HEK293 (cell line): ENCODE measurements at regions of chr1 and their contacts with region 1.

Region 1: GRCh38 chr1:161292631-161293030 is 17.1 kb downstream of the MPZ start:
- H3K4me3 ChIP-seq: no peak overlapping the region
- H3K27ac ChIP-seq: no peak overlapping the region
- H3K4me1 ChIP-seq: no peaks in the 10 kb centered on the region
- CTCF ChIP-seq: no peak

Region 2: DNA sequence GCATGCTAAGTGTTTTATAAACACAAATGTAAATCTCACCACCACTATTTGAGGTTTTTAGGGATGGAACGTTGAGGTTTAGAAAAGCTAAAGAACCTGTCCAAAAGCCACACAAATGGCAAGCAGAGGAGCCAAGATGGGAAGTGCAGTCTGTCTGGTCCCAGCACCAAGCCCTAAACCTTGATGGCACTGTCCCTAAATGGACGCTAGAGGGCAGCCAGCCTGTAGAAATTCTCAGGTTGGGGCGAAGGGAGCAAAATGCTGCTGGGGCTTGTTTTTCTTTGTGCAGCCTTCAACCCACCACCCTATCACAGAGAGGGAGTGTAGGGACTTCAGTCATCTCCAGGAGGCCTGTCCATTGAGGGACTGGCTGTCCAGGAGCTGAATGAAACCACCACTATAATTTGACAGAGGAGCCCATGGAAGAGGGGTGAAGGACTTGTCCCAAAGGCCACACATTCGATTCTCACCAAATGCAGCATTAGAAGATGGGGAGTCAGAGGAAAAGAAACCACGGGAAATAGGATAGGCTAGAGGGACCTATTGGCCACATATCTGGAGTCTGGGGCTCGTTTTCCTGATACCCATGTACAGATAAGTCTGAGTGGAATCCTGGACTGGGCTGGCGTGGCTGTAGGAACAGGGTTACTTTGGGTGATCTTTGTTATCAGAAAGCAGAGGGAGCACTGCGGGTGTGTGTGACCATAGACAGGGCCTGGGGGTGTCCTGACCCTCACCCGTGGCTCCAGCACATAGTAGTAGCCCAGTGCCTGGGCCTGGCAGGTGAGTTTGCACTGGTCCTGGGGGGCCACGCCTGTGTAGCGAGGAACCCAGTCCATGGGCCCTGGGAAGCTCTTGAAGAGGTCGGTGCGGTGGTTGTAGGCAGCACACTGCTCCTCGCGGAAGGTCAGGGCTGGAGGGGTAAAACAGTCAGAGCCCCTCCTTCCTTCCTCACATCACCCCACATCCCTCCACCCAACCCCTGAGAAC is 99.9 kb before region 1 on chr1:
- CTCF ChIA-PET with region 1: interaction called, 12 read pairs
- POLR2A ChIA-PET with region 1: no interaction called
- H3K4me3 ChIP-seq: no peak overlapping the region
- H3K27ac ChIP-seq: no peak overlapping the region
- H3K4me1 ChIP-seq: no peaks in the 10 kb centered on the region
- CTCF ChIP-seq: peak; percentile 71

Region 3: DNA sequence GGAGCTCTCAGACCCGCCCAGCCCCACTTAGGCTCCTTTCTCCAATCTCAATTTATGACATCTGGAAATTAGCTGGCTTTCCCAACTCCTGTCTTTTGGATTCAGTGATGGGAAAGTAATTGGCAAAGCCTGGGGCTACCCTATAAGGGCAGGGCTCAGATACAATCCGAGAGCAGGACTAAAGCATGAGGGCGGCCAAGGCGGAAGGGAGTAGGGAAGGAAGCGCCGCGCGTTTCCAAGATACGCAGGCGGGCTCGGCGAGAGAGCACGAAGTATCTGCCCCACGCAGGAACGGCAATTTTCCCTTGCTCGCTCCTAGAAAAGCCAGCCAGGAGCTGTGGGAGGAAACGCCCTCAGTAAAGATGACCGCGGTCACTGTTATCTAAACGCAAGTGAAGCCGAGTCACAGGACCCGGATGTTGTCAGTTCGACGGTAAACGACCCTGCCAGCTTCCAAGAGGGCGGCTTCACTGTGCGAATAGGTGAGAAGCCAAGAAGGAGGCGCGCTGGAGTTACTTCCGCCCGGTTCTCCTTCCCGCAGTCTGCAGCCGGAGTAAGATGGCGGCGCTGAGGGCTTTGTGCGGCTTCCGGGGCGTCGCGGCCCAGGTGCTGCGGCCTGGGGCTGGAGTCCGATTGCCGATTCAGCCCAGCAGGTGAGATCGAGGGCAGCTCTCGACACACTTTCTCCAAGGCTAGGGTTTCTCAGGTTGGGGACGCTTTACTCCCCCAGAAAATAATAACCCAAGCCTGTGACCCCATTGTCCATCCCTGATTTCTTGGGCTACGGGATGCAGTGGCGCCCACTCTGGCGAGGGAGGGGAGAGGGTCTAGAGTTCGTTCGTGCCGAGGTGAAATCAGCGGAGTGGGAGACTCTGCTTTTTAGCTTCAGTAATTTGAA is 90.6 kb before region 1 on chr1 and contains the start of gene NDUFS2:
- CTCF ChIA-PET with region 1: interaction called, 10 read pairs
- POLR2A ChIA-PET with region 1: no interaction called
- H3K4me3 ChIP-seq: peak within 1 kb of the TSS; percentile 56
- H3K27ac ChIP-seq: peak within 1 kb of the TSS; percentile 72
- H3K4me1 ChIP-seq: peaks cover 9% of the 10 kb centered on the region; the same call in 1 of the 2 replicates
- CTCF ChIP-seq: peak; percentile 79

Region 4: DNA sequence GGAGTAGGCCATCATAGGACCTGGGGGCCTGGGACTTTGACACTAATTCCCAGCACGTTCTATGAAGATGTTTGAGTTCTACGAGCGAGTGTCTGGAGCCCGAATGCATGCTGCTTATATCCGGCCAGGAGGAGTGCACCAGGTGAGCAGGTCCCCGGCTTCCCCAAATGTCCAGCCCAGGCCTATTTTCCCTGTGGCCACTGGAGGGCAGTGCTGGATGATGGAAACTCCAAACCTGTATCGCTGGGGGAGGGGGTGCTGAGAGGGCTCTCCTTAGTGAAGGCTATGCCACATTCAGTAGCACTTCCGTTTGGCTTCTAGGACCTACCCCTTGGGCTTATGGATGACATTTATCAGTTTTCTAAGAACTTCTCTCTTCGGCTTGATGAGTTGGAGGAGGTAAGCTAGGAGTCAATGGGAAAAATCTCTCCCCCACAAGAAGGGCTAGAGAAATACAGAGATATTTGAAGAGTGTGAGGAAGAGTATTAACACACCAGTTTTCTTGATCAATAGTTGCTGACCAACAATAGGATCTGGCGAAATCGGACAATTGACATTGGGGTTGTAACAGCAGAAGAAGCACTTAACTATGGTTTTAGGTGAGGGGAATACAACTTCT is 82.7 kb before region 1 on chr1:
- CTCF ChIA-PET with region 1: interaction called, 21 read pairs
- POLR2A ChIA-PET with region 1: no interaction called
- H3K4me3 ChIP-seq: no peak overlapping the region
- H3K27ac ChIP-seq: no peak overlapping the region
- H3K4me1 ChIP-seq: no peaks in the 10 kb centered on the region
- CTCF ChIP-seq: peak; percentile 83

Region 5: GRCh38 chr1:161261261-161262235 is 31.1 kb before region 1 on chr1:
- CTCF ChIA-PET with region 1: interaction called, 12 read pairs
- POLR2A ChIA-PET with region 1: no interaction called
- H3K4me3 ChIP-seq: no peak overlapping the region
- H3K27ac ChIP-seq: no peak overlapping the region
- H3K4me1 ChIP-seq: peaks cover 10% of the 10 kb centered on the region; the same call in 1 of the 2 replicates
- CTCF ChIP-seq: no peak